A549 (cell line): ENCODE measurements at regions of chr17 and their contacts with region 1.

Region 1: GRCh38 chr17:49031965-49032928 is 35.1 kb downstream of the IGF2BP1 start:
- DNase-seq: peak; percentile 87 to 96
- ATAC-seq: peak; percentile 80 to 83
- H3K4me3 ChIP-seq: no peak overlapping the region
- H3K27ac ChIP-seq: peak overlapping the region; percentile 22 to 63; a peak in 5 of 6 replicates
- H3K4me1 ChIP-seq: peaks cover 15% of the 10 kb centered on the region
- CTCF ChIP-seq: peak; percentile 98
- EP300 ChIP-seq: no peak
- POLR2A ChIP-seq: no peak
- RAD21 ChIP-seq: peak; percentile 98 to 99

Region 2: GRCh38 chr17:48678141-48678971 is 353.9 kb before region 1 on chr17:
- CTCF ChIA-PET with region 1: interaction called, 18 read pairs
- POLR2A ChIA-PET with region 1: no interaction called
- DNase-seq: peak; percentile 74 to 86
- ATAC-seq: peak; percentile 96 to 98
- H3K4me3 ChIP-seq: peak overlapping the region; percentile 3; the same call in 1 of the 3 replicates
- H3K27ac ChIP-seq: peak overlapping the region; percentile 28 to 78
- H3K4me1 ChIP-seq: peaks cover 8% of the 10 kb centered on the region; the same call in 1 of the 3 replicates
- CTCF ChIP-seq: peak; percentile 99
- EP300 ChIP-seq: no peak
- POLR2A ChIP-seq: no peak
- RAD21 ChIP-seq: peak; percentile 91 to 97

Region 3: DNA sequence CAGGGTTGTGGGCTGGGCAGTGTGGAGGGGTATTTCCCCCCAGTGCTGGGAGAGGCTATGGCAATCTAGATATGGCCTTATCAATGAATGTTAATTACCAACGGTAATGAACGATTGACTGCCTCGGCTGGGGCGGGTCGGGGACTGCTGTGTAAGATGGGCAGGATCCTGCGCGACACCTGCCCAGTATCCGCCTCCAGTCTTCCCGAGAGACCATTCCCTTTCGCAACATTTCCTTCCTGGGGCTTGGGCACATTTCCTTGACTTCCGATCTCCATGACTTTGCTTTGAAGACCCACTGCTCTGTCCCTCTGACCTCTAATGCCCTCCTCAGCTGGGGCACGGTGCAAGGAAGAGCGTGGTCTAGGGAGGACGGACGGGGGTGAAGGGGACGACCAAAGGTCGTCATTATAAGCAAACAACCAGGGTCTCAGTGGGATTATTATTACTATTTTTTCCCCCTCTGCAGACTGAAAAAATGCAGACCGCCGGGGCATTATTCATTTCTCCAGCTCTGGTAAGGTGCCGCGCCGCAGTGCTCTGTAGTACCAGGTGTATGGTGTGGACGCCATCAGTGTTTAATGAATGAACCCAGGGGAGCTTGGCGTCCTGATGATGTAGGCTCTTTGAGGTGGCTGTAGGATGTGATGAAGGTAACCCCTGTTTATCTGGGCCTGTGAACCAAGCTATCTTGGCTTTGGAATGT is 139.2 kb before region 1 on chr17:
- CTCF ChIA-PET with region 1: interaction called, 91 read pairs
- POLR2A ChIA-PET with region 1: interaction called, 3 read pairs
- DNase-seq: no peak
- ATAC-seq: no peak
- H3K4me3 ChIP-seq: peak overlapping the region; percentile 86
- H3K27ac ChIP-seq: peak overlapping the region; percentile 89 to 92
- H3K4me1 ChIP-seq: peaks cover 26% of the 10 kb centered on the region
- CTCF ChIP-seq: no peak
- EP300 ChIP-seq: no peak
- POLR2A ChIP-seq: no peak
- RAD21 ChIP-seq: no peak

Region 4: GRCh38 chr17:48928876-48929811 is 103.1 kb before region 1 on chr17:
- CTCF ChIA-PET with region 1: interaction called, 93 read pairs
- POLR2A ChIA-PET with region 1: no interaction called
- DNase-seq: no peak
- ATAC-seq: peak in 1 of 2 experiments; percentile 4; a peak in 1 of 6 replicates
- H3K4me3 ChIP-seq: no peak overlapping the region
- H3K27ac ChIP-seq: no peak overlapping the region
- H3K4me1 ChIP-seq: no peaks in the 10 kb centered on the region
- CTCF ChIP-seq: no peak
- EP300 ChIP-seq: no peak
- POLR2A ChIP-seq: no peak
- RAD21 ChIP-seq: no peak

Region 5: GRCh38 chr17:48997083-48997826 is 35.0 kb before region 1 on chr17 and contains the start of gene IGF2BP1:
- CTCF ChIA-PET with region 1: interaction called, 639 read pairs
- POLR2A ChIA-PET with region 1: interaction called, 24 read pairs
- DNase-seq: peak; percentile 88 to 95
- ATAC-seq: peak; percentile 49 to 58
- H3K4me3 ChIP-seq: peak within 1 kb of the TSS; percentile 60
- H3K27ac ChIP-seq: peak within 1 kb of the TSS; percentile 93 to 97
- H3K4me1 ChIP-seq: peaks cover 40% of the 10 kb centered on the region
- CTCF ChIP-seq: no peak
- EP300 ChIP-seq: no peak
- POLR2A ChIP-seq: peak; percentile 4; the same call in 1 of the 2 replicates
- RAD21 ChIP-seq: peak in 1 of 2 experiments; percentile 14; a peak in 1 of 5 replicates
- polyA plus RNA-seq, gene IGF2BP1: 26.2 and 30.1 TPM in 2 replicates

Region 6: DNA sequence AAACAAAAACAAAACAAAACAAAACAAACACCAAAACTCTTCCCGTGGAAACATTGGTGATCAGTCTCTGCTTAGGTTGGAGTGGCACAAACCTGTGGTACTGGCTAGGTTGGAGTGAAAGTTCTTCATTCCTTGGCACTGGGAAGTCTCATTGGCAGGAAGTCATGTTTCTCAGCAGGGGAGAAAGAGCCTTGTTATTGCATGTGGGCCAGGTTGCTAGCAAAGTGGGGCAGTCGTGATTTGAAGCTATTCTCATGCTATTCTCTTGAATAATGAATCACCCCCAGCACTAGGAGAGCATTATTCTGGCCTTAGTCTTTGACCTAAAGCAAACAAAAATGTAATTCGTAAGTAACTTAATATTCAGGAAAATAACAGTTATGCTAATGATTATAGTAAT is 76.1 kb after region 1 on chr17:
- CTCF ChIA-PET with region 1: interaction called, 16 read pairs
- POLR2A ChIA-PET with region 1: no interaction called
- DNase-seq: peak; percentile 62 to 72
- ATAC-seq: peak; percentile 36 to 52; a peak in 5 of 6 replicates
- H3K4me3 ChIP-seq: no peak overlapping the region
- H3K27ac ChIP-seq: peak overlapping the region; percentile 81 to 85
- H3K4me1 ChIP-seq: peaks cover 50% of the 10 kb centered on the region
- CTCF ChIP-seq: no peak
- EP300 ChIP-seq: peak; percentile 19 to 59; a peak in 2 of 5 replicates
- POLR2A ChIP-seq: no peak
- RAD21 ChIP-seq: no peak; a peak in 1 of 5 replicates

Region 7: GRCh38 chr17:49456183-49456965 is 424.1 kb after region 1 on chr17:
- CTCF ChIA-PET with region 1: no interaction called
- POLR2A ChIA-PET with region 1: no interaction called
- DNase-seq: no peak
- ATAC-seq: 0 out of 6 replicates have a peak, but pooled peaks of 1 of the 2 experiments have one; percentile 14
- H3K4me3 ChIP-seq: no peak overlapping the region
- H3K27ac ChIP-seq: no peak overlapping the region
- H3K4me1 ChIP-seq: peaks cover 4% of the 10 kb centered on the region; the same call in 1 of the 3 replicates
- CTCF ChIP-seq: no peak
- EP300 ChIP-seq: no peak
- POLR2A ChIP-seq: no peak
- RAD21 ChIP-seq: no peak